Endothelial cell of umbilical vein (primary cell): ENCODE measurements at regions of chr3 and their contacts with region 1.

Region 1: DNA sequence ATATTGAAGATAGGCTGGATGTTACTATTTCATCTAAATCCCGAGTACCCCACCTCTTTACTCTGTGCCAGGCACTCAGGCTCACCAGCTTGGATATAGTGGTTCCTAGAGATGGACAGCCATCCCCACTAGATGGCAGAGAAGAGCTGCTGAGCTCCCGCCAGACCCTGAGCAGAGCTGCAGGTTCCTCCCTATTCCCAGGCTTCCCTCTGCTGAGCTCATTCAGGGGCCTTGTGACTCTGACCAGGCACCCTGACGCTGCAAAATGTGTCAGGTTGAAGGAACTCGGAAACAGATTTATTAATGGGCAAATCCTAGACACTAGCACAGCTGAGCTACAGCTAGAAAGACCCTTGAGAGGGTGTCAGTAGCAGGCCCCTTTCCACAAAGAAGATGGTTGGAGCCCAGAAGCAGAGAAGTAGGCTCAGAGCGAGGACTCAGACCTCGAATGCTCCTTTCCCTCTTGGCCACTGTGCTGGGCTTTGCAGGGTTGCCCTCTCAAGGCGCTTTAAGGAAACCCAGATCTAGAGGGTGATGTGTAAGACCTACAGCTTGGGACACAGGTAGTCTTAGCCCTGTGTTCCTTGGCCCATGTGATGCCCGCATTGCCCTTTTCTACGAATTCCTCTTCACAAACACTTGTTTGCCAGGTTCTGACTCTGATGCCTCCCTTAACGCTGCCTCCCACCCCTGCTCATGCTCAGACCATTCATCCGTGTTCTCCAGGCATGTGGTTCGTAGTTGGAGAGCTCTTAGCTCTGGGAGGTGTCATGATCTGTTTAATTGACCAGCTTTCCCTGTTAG is 38.0 kb upstream of the RHO start:
- DNase-seq: peak; percentile 90
- H3K4me3 ChIP-seq: no peak overlapping the region
- H3K27ac ChIP-seq: peak overlapping the region; percentile 81
- H3K4me1 ChIP-seq: peaks cover 23% of the 10 kb centered on the region
- H3K27me3 ChIP-seq: no peaks in the 10 kb centered on the region
- CTCF ChIP-seq: peak; percentile 86 to 90
- POLR2A ChIP-seq: no peak

Region 2: DNA sequence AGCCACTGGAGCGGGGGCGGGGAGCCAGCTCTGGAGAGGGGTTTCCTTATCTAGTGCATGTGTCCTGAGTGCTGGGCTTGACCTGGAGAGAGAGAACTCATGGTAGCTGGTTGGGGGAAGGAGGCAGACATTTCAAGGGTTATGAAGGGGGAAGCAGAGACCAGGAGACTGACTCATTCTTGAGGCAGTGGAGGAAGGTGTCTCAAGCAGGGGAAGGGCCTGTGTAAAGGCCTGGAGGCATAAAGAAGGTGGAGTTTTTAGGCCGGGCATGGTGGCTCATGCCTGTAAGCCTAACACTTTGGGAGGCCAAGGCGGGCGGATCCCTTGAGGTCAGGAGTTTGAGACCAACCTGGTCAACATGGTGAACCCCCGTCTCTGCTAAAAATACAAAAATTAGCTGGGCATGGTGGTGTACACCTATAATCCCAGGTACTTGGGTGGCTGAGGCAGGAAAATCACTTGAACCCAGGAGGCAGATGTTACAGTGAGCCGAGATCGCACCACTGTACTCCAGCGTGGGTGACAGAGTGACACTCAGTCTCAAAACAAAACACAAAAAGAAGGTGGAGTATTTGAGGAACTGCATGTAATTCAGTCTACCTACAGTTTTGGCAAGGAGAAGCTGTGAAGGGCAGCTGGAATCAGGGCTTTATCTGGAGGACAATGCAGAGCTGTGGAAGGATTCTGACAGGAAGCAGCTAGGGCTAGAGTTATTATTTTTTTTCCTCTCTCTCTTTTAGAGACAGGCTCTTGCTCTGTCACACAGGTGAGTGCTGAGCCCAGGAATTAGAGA is 59.2 kb after region 1 on chr3:
- CTCF ChIA-PET with region 1: interaction called, 49 read pairs
- POLR2A ChIA-PET with region 1: no interaction called
- dilution Hi-C with region 1: no loop called
- intact Hi-C with region 1: no loop called
- DNase-seq: no peak
- H3K4me3 ChIP-seq: no peak overlapping the region
- H3K27ac ChIP-seq: no peak overlapping the region
- H3K4me1 ChIP-seq: peaks cover 3% of the 10 kb centered on the region
- H3K27me3 ChIP-seq: no peaks in the 10 kb centered on the region
- CTCF ChIP-seq: no peak
- POLR2A ChIP-seq: no peak

Region 3: DNA sequence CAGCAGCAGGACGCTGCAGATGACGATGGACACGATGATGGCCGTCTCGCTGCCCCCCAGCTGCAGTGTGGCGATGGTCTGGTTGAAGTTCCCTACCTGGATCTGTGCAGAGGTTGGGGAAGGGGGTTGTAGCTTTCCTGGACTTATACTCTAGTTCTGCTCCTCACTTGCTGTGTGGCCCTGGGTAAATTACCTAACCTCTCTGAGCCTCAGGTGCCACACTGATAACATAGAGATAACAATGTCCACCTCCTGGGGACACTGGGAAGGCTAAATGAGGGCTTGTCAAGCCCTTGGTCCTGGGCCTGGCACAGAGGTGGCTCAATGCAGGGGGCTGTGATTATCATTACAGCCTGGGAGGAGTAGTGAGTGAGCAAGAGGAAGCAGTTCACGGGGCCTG is 79.4 kb after region 1 on chr3:
- CTCF ChIA-PET with region 1: interaction called, 24 read pairs
- POLR2A ChIA-PET with region 1: no interaction called
- dilution Hi-C with region 1: no loop called
- intact Hi-C with region 1: no loop called
- DNase-seq: no peak
- H3K4me3 ChIP-seq: no peak overlapping the region
- H3K27ac ChIP-seq: no peak overlapping the region
- H3K4me1 ChIP-seq: no peaks in the 10 kb centered on the region
- H3K27me3 ChIP-seq: no peaks in the 10 kb centered on the region
- CTCF ChIP-seq: no peak
- POLR2A ChIP-seq: no peak

Region 4: GRCh38 chr3:129596194-129597086 is 106.0 kb after region 1 on chr3:
- CTCF ChIA-PET with region 1: interaction called, 44 read pairs
- POLR2A ChIA-PET with region 1: interaction called, 4 read pairs
- dilution Hi-C with region 1: no loop called
- intact Hi-C with region 1: loop called (anchors 1 kb)
- DNase-seq: peak; percentile 98
- H3K4me3 ChIP-seq: peak overlapping the region in 2 of 3 experiments; percentile 1 to 10
- H3K27ac ChIP-seq: peak overlapping the region; percentile 91
- H3K4me1 ChIP-seq: peaks cover 96% of the 10 kb centered on the region
- H3K27me3 ChIP-seq: no peaks in the 10 kb centered on the region
- CTCF ChIP-seq: no peak
- POLR2A ChIP-seq: peak; percentile 45

Region 5: GRCh38 chr3:129650256-129650872 is 159.9 kb after region 1 on chr3:
- CTCF ChIA-PET with region 1: interaction called, 7 read pairs
- POLR2A ChIA-PET with region 1: no interaction called
- dilution Hi-C with region 1: no loop called
- intact Hi-C with region 1: loop called (anchors 1 kb)
- DNase-seq: peak; percentile 80
- H3K4me3 ChIP-seq: no peak overlapping the region
- H3K27ac ChIP-seq: no peak overlapping the region
- H3K4me1 ChIP-seq: peaks cover 24% of the 10 kb centered on the region
- H3K27me3 ChIP-seq: no peaks in the 10 kb centered on the region
- CTCF ChIP-seq: peak; percentile 58
- POLR2A ChIP-seq: no peak

Region 6: DNA sequence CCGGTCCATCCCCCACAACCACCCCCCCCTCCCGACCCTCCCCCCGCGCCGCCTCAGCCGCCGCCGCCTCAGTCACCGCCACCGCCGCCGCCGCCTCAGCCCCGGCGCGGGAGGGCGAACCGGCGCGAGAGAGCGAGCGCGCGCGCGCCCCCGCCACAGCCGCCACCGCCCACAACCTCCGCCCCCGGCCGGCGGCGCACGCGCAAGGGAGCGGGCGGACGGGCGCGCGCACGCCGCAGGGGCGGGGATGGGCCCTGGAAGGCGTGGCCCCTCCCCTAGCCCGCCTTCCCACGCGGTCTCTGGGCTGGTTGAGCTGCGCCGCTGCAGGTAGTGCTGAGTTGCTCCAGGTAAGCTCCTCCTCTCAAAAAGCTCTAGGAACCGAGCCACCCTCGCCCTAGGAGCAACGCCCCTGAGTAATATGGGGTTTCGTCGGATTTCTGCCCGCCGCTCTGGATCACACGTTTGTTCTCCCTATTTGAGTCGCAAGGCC is 403.2 kb after region 1 on chr3 and contains the start of gene TMCC1:
- CTCF ChIA-PET with region 1: interaction called, 4 read pairs
- POLR2A ChIA-PET with region 1: no interaction called
- dilution Hi-C with region 1: no loop called
- intact Hi-C with region 1: loop called (anchors 5 kb)
- DNase-seq: peak; percentile 78
- H3K4me3 ChIP-seq: peak within 1 kb of the TSS; percentile 54 to 91 (median 89)
- H3K27ac ChIP-seq: peak within 1 kb of the TSS; percentile 89
- H3K4me1 ChIP-seq: peaks cover 47% of the 10 kb centered on the region
- H3K27me3 ChIP-seq: no peaks in the 10 kb centered on the region
- CTCF ChIP-seq: no peak
- POLR2A ChIP-seq: peak; percentile 54
- total RNA-seq, gene TMCC1: 36.6 and 38.4 TPM in 2 replicates